PC-3 (cell line): ENCODE measurements at regions of chr7 and their contacts with region 1.

Region 1: DNA sequence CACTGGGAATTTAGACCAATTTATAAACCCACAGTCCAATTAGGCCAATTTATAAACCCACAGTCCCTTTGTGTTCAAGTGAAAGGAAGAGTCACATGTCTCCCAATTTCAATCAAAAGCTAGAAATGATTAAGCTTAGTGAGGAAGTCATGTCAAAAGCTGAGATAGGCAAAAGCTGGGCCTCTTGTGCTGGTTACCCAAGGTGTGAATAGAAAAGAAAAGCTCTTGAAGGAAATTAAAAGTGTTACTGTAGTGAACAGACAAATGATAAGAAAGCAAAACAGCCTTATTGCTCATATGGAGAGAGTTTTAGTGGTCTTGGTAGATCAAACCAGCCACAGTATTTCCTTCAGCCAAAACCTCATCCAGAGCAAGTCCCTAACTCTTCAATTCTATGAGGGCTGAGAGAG is 245.0 kb downstream of the HDAC9 start:
- DNase-seq: no peak
- ATAC-seq: no peak
- H3K4me3 ChIP-seq: no peak overlapping the region
- H3K27ac ChIP-seq: no peak overlapping the region
- H3K4me1 ChIP-seq: no peaks in the 10 kb centered on the region
- H3K27me3 ChIP-seq: no peaks in the 10 kb centered on the region
- CTCF ChIP-seq: no peak

Region 2: DNA sequence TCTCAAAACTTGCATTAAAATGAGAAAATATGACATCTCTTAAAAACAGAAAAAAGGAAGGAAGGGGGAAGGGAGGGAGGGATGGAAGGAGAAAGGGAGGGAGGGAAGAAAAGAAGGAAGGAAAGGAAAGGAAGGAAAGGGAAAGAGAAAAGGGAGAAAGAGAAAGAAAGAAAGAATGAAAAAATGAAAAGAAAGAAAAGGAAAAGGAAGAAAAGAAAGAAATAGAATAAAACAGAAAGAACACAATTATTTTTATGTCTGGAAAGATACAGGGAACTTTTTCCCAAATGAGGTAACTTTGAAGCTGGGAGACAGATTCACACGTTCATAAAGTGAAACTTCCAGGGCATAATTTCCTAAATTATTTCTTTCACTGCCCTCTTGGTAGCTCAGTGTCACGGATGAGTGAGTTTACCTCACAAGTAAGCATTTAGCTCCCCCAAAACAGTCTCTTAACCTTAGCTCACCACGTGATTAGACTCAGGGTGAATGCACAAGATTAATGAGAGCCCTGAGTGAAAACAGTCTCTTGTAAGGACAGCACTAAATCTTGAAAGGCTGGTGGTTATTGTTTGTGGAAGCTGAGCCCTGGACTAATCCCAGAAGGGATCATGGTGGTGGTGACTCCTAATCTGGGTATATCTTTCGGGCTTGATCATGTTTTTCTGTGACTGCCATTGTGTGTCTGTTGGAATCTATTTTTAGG is 319.1 kb before region 1 on chr7:
- CTCF ChIA-PET with region 1: no interaction called
- POLR2A ChIA-PET with region 1: interaction called, 10 read pairs
- intact Hi-C with region 1: no loop called
- DNase-seq: no peak
- ATAC-seq: no peak
- H3K4me3 ChIP-seq: no peak overlapping the region
- H3K27ac ChIP-seq: no peak overlapping the region
- H3K4me1 ChIP-seq: peaks cover 14% of the 10 kb centered on the region
- H3K27me3 ChIP-seq: no peaks in the 10 kb centered on the region
- CTCF ChIP-seq: no peak